MCF 10A (cell line): ENCODE measurements at regions of chr19 and their contacts with region 1.

Region 1: GRCh38 chr19:12938234-12939025 is at the start of gene CALR:
- DNase-seq: peak; percentile 100
- H3K4me3 Mint-ChIP-seq: peak within 1 kb of the TSS; percentile 96
- H3K27ac Mint-ChIP-seq: peak within 1 kb of the TSS; percentile 96
- H3K4me1 Mint-ChIP-seq: peaks cover 16% of the 10 kb centered on the region
- H3K27me3 Mint-ChIP-seq: no peaks in the 10 kb centered on the region
- CTCF ChIP-seq: no peak
- total RNA-seq, gene CALR: 792 and 1,042 TPM in 2 replicates

Region 2: GRCh38 chr19:12890787-12891552 is 47.5 kb before region 1 on chr19 and contains the start of gene GCDH:
- CTCF ChIA-PET with region 1: no interaction called
- POLR2A ChIA-PET with region 1: interaction called, 20 read pairs
- intact Hi-C with region 1: no loop called
- DNase-seq: peak; percentile 100
- H3K4me3 Mint-ChIP-seq: peak within 1 kb of the TSS; percentile 99
- H3K27ac Mint-ChIP-seq: peak within 1 kb of the TSS; percentile 69
- H3K4me1 Mint-ChIP-seq: peaks cover 16% of the 10 kb centered on the region
- H3K27me3 Mint-ChIP-seq: no peaks in the 10 kb centered on the region
- CTCF ChIP-seq: no peak
- total RNA-seq, gene GCDH: 22.9 and 38.0 TPM in 2 replicates

Region 3: DNA sequence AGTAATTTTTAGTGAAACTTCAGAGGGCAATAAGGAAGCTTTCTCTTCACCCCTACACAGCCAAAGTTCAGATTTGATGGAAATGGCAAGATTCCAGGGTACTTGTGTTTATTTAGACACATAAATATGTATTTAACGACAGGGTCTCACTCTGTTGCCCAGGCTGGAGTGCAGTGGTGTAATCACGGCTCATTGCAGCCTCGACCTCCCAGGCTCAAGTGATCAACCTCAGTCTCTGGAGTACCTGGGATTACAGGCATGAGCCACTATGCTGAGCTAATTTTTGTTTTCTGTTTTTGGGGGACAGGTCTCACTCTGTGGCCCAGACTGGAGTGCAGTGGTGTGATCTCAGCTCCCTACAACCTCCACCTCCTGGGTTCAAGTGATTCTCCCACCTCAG is 17.4 kb before region 1 on chr19:
- CTCF ChIA-PET with region 1: no interaction called
- POLR2A ChIA-PET with region 1: interaction called, 18 read pairs
- intact Hi-C with region 1: no loop called
- DNase-seq: no peak
- H3K4me3 Mint-ChIP-seq: no peak overlapping the region
- H3K27ac Mint-ChIP-seq: no peak overlapping the region
- H3K4me1 Mint-ChIP-seq: peaks cover 6% of the 10 kb centered on the region
- H3K27me3 Mint-ChIP-seq: no peaks in the 10 kb centered on the region
- CTCF ChIP-seq: no peak

Region 4: DNA sequence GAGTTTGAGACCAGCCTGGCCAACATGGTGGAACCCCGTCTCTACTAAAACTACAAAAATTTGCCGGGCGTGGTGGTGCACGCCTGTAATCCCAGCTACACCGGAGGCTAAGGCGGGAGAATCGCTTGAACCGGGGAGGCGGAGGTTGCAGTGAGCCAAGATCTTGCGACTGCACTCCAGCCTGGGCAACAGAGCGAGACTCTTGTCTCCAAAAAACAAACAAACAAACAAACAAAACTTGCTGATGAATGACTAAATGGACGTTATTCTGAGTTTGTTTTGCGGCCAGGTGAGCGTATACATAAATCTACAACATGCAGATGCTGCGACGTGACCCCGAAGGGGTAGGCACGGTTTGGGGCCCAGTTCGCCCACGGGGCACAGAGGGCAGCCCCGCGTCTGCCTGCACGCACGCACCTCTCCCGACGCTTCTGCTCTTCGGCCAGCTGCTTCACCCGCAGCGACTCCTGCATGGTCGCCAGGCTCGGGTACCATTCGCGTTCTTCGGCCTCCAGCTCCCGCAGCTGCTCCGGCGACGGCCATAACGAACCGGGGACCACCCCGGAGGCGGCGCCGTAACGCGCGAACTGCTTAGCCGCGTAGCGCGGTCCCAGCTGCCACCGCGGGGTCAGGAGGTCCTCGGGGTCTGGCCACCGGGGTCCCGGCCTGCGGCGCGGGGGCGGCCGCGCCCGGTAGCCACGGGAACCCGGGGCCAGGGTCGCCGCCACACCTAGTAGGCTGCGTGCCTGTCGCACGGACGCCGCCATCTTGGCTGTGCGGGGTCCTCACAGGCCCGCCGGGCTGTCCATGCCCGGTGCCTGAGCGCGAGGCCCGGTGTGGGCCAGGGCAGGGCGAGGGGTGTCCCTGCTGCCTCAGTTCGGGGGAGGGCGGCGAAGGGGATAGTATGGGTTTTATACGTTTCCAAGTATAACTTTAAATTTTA is 18.3 kb after region 1 on chr19 and contains the start of gene GADD45GIP1:
- CTCF ChIA-PET with region 1: no interaction called
- POLR2A ChIA-PET with region 1: interaction called, 15 read pairs
- intact Hi-C with region 1: no loop called
- DNase-seq: peak; percentile 80
- H3K4me3 Mint-ChIP-seq: peak within 1 kb of the TSS; percentile 83
- H3K27ac Mint-ChIP-seq: peak within 1 kb of the TSS; percentile 89
- H3K4me1 Mint-ChIP-seq: peaks cover 23% of the 10 kb centered on the region
- H3K27me3 Mint-ChIP-seq: no peaks in the 10 kb centered on the region
- CTCF ChIP-seq: no peak
- total RNA-seq, gene GADD45GIP1: 44.4 and 47.5 TPM in 2 replicates